Activated CD4-positive, alpha-beta memory T cell treated with anti-CD3 and anti-CD28 coated beads, Interleukin-2, amount 10 ng/mL, durations not matched to agents 7 days and 5 days (primary cell): ENCODE measurements at regions of chr13 and their contacts with region 1.

Region 1: GRCh38 chr13:74062933-74063332 is 71.3 kb downstream of the KLF12 start:
- DNase-seq: peak; percentile 60
- H3K4me3 Mint-ChIP-seq: peak overlapping the region; percentile 74
- H3K27ac Mint-ChIP-seq: peak overlapping the region; percentile 88
- H3K4me1 Mint-ChIP-seq: peaks cover 75% of the 10 kb centered on the region
- H3K27me3 Mint-ChIP-seq: no peaks in the 10 kb centered on the region

Region 2: DNA sequence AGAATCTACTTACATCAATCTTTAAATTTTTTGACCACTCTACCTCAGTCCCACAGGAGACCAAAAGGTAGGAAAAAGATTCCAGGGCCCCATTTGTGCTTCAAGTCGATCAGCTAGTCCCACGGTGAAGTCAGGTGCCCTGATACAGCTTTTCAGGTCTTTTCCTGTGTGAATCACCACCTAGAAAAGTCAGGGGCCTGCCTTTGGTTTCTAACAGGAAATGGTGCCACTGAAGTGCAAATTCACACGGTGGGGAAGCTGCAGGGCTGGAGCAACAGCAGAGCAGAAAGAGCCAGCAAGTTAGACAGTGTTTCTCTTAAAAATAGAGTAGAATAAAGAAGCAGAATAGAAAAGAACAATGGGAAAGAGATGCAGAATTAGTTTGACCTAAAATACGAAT is 36.2 kb before region 1 on chr13:
- CTCF ChIA-PET with region 1: no interaction called
- POLR2A ChIA-PET with region 1: interaction called, 23 read pairs
- DNase-seq: peak; percentile 74
- H3K4me3 Mint-ChIP-seq: peak overlapping the region; percentile 65
- H3K27ac Mint-ChIP-seq: peak overlapping the region; percentile 88
- H3K4me1 Mint-ChIP-seq: peaks cover 30% of the 10 kb centered on the region
- H3K27me3 Mint-ChIP-seq: no peaks in the 10 kb centered on the region

Region 3: DNA sequence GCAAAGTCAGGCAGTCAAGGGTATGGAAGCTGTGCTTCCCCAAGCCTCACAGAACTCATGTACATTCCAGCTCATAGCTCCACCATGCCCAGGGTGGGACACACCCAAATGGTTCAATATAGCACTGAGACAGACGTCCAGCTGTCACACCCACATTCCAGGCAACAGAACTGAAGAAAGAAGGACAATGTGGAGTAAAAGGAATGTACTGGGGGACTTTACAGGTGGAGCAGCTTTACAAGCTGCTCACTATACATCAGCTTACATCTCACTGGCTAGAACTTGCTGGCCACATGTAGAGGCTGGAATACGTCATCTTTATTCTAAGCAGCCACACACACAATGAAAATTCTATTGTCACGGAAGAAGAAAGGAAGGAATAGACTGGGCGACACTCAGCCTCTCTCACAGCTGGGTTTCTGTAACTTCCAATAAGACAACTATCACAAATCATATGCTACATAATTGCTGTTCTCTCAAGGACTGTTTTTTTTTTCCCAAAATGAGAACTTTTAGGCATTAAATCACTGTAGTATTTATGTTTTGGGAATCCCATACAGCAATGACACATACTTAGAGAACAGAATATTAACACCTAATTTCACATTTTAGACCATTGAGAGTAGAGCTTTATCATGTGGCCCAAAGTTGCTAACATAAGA is 14.9 kb before region 1 on chr13:
- CTCF ChIA-PET with region 1: interaction called, 3 read pairs
- POLR2A ChIA-PET with region 1: interaction called, 15 read pairs
- DNase-seq: no peak
- H3K4me3 Mint-ChIP-seq: no peak overlapping the region
- H3K27ac Mint-ChIP-seq: no peak overlapping the region
- H3K4me1 Mint-ChIP-seq: peaks cover 34% of the 10 kb centered on the region
- H3K27me3 Mint-ChIP-seq: no peaks in the 10 kb centered on the region